Gastrocnemius medialis (tissue), 4 donors: ENCODE measurements at regions of chr7 and their contacts with region 1.

Region 1: DNA sequence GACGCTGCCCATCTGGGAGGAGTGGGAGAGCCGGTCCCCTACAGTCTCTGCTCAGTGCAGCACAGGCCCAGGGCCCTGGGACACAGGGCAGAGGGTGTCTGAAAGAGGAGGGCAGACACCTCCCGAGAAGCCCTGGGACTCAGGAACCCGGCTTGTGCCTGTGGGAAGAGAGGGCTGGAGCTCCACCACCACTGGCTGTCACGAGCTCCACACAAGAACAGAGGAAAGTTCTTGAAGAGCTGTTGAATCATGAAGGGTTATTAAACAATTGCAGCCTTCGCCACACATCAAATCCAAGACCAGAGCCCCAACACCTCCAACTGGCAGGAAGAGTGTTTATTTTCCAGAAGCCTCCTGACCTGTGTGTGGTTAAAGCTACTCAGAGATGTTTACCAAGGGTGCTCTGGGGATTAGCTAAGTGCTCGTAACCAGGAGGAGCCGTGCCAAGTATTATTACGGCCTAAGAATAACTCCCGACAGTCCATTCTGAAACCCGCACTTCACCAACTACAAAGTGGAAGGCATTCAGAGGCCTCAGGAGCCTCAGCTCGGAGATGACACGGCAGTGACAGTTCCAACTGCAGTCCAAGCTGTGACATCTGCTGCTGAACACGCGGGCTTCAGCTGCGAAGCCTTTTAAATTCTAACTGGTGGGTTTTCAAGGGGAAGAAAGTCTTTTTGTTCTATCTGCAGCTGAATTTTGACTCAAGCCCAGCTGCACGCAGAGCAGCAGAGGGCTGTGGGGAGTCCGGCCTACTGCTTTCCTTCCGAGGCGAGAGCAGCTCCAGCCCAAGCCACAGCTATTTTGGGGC is 75.1 kb downstream of the MAD1L1 start:
- DNase-seq: peak; percentile 40 to 42
- ATAC-seq: peak; percentile 85 to 91
- H3K4me3 ChIP-seq: no peak overlapping the region
- H3K27ac ChIP-seq: peak overlapping the region; percentile 66 to 92 (median 74)
- H3K4me1 ChIP-seq: peaks cover 24% of the 10 kb centered on the region in 2 donors
- H3K27me3 ChIP-seq: no peaks in the 10 kb centered on the region
- CTCF ChIP-seq: no peak
- POLR2A ChIP-seq: no peak

Region 2: DNA sequence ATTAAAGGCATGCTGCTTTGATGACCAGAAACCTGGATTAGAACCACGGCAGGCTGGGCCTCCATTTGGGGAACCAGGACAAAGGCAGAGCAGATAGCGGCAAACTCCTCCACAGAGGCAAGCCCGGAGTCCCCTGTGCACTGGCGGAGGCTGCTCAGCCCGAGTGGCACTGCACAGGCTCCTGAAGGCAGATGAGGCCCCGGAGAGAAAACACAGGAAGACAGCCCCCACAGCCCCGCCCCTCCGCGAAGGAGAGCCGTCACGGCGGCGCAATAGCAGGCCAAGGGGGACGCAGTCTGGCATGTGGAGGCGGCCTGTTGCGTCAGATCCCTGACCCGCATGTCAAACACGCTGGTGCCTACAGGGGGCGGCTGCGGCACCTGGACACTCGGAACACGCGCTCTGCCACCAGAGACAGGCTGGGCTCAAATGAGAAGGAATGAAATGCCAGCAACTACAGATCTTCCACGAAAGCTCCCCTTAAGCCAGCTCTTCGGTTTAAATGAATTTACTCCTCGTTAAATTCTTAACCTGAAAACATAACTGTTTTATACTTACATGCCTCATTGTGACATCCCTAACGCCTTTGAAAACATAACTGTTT is 53.5 kb before region 1 on chr7:
- in situ Hi-C with region 1: no loop called
- intact Hi-C with region 1: loop called (anchors 10 kb)
- DNase-seq: peak; percentile 67 to 82
- ATAC-seq: peak; percentile 79 to 85
- H3K4me3 ChIP-seq: peak overlapping the region; percentile 8 to 45 (median 34)
- H3K27ac ChIP-seq: peak overlapping the region in 2 of 4 donors; percentile 6 to 14
- H3K4me1 ChIP-seq: peaks cover 28% of the 10 kb centered on the region in 2 donors
- H3K27me3 ChIP-seq: no peaks in the 10 kb centered on the region
- CTCF ChIP-seq: peak; percentile 61 to 86 (median 80)
- POLR2A ChIP-seq: peak in 1 of 2 donors; percentile 23

Region 3: GRCh38 chr7:2175514-2175913 is 17.8 kb after region 1 on chr7:
- in situ Hi-C with region 1: no loop called
- intact Hi-C with region 1: loop called (anchors 1 kb)
- DNase-seq: peak in 1 of 2 donors; percentile 39
- ATAC-seq: peak in 1 of 2 donors; percentile 61
- H3K4me3 ChIP-seq: no peak overlapping the region
- H3K27ac ChIP-seq: peak overlapping the region in 3 of 4 donors; percentile 20 to 71 (median 69)
- H3K4me1 ChIP-seq: peaks cover 27 to 47% of the 10 kb centered on the region in 2 donors
- H3K27me3 ChIP-seq: no peaks in the 10 kb centered on the region
- CTCF ChIP-seq: no peak
- POLR2A ChIP-seq: no peak

Region 4: DNA sequence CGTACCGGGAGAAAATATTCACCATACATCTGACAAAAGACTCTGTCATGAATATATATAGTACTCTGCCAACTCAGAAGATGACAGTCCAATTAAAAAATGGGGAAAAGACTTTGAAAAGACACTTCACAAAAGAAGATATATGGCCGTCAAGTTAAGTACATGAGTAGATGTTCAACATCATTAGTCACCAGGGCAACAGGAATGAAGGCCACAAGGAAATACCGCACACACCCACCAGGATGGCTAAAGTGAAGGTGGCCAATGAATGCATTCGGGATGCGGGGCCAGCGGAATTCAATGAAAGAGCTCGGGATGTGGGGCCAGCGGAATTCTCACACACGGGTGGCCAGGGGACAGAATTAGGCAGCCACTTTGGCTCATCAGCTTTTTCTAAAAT is 32.9 kb after region 1 on chr7:
- in situ Hi-C with region 1: no loop called
- intact Hi-C with region 1: loop called (anchors 5 kb)
- DNase-seq: no peak
- ATAC-seq: no peak
- H3K4me3 ChIP-seq: no peak overlapping the region
- H3K27ac ChIP-seq: no peak overlapping the region
- H3K4me1 ChIP-seq: peaks cover 16 to 20% of the 10 kb centered on the region in 2 donors
- H3K27me3 ChIP-seq: no peaks in the 10 kb centered on the region
- CTCF ChIP-seq: no peak
- POLR2A ChIP-seq: no peak